Heart right ventricle (tissue), 16 donors: ENCODE measurements at regions of chr2 and their contacts with region 1.

Region 1: GRCh38 chr2:168090366-168091135 is 156.8 kb downstream of the STK39 start:
- DNase-seq: no peak
- ATAC-seq: no peak
- H3K4me3 ChIP-seq: no peak overlapping the region
- H3K27ac ChIP-seq: no peak overlapping the region
- H3K4me1 ChIP-seq: peaks cover 0 to 9% (median 0%) of the 10 kb centered on the region in 9 donors
- H3K27me3 ChIP-seq: no peaks in the 10 kb centered on the region
- CTCF ChIP-seq: no peak

Region 2: DNA sequence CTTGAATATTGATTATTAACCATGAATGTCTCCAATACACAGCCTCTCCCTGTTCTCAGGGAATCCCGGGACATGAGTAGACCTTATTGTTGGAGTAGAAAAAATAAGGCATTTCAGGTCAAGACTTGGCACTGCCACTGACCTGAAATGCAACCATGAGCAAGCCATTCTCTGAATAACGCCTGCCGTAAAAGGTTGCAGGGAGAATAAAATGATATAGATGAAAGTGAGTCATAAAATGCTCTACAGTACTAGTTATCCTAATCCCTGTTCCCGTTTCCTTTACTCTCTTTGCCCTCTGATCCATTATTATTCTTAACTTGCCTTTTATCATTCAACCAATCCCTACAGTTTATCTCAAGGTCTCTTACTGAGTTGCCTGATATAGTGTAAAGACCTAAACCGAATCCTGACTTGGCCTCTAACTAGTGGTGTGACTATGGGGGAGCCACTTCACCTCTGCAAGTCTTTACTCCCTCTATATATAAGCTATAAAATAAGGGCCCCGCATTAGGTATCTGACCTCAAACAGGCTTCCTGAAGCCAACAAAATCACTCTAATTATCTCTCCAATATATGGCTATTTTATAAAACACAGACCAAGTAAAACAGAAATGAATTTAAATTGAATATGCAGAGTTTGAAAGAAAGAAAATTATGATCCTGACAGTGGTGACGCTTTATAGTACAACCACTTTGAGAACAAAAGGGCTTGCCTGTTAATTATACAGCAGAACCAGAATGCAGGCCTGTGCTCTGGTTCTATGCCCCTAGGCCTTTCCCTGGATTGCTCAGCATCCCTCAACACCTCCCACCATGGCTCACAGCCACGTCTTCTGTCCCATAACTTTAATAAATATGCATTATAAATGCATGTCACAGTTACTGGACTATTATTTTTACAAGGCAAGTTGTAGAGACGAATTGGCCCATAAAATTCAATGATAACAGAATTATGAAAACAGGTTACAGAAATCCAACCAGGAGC is 26.2 kb before region 1 on chr2:
- intact Hi-C with region 1: loop called in 1 of 10 experiments (anchors 1 kb)
- DNase-seq: no peak
- ATAC-seq: no peak
- H3K4me3 ChIP-seq: no peak overlapping the region
- H3K27ac ChIP-seq: no peak overlapping the region
- H3K4me1 ChIP-seq: no peaks in the 10 kb centered on the region
- H3K27me3 ChIP-seq: no peaks in the 10 kb centered on the region
- CTCF ChIP-seq: no peak